CD8-positive, alpha-beta T cell (primary cell): ENCODE measurements at regions of chr19 and their contacts with region 1.

Region 1: DNA sequence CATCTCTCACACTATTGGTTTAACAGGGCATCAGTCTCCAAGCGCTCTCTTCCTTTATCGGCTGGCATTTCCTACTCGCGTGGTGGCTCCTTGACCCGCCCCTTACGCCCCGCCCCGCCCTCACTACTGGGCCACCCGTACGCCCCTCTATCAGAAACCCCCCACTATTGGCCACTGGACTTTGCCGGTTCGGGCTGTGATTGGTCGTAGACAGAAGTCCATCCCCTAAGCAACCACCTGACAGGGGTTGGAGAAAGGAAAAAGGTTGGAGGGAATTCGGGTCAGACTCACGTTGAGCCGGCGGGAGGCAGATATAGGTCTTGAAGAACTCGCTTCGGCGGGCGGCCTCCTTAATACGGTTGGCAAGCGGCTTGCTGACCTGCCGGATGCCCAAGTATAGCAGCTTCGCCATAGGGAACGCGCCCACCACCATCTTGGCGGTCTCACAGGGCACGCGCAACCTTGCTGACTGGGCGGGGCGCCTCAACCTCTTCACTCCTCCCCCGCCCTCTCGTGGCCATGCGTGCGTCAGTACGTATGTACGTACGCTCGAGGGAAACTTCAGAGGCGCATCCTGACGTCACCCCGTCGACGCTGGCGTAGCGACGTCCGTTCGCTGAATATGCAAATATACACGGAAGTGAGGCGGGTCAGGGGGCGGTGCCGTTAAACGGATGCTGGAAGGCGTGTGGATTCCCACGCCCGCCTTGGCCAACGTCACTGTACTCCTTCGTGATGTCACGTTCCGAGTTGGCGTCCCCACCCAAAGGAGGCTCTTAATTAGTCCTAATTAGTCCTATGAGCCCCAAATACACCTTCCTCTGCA is at the start of gene OPA3:
- DNase-seq: peak; percentile 97 to 100 (median 99)
- ATAC-seq: peak; percentile 86
- H3K4me3 ChIP-seq: peak within 1 kb of the TSS; percentile 80 to 86
- H3K4me3 Mint-ChIP-seq: peak within 1 kb of the TSS; percentile 96
- H3K27ac ChIP-seq: peak within 1 kb of the TSS; percentile 95 to 99
- H3K27ac Mint-ChIP-seq: peak within 1 kb of the TSS; percentile 99
- H3K4me1 ChIP-seq: peaks cover 6% of the 10 kb centered on the region
- H3K4me1 Mint-ChIP-seq: peaks cover 19% of the 10 kb centered on the region
- H3K27me3 ChIP-seq: no peaks in the 10 kb centered on the region
- H3K27me3 Mint-ChIP-seq: peaks cover 7% of the 10 kb centered on the region
- CTCF ChIP-seq: no peak
- total RNA-seq, gene OPA3: 5.6 to 5.7 TPM

Region 2: GRCh38 chr19:44746946-44747738 is 837.4 kb before region 1 on chr19:
- CTCF ChIA-PET with region 1: no interaction called
- POLR2A ChIA-PET with region 1: no interaction called
- intact Hi-C with region 1: loop called in 1 of 2 experiments (anchors 5 kb)
- DNase-seq: peak; percentile 59 to 97 (median 91)
- ATAC-seq: peak; percentile 86
- H3K4me3 ChIP-seq: peak overlapping the region; percentile 60 to 63
- H3K4me3 Mint-ChIP-seq: peak overlapping the region; percentile 91
- H3K27ac ChIP-seq: peak overlapping the region; percentile 41 to 89
- H3K27ac Mint-ChIP-seq: peak overlapping the region; percentile 95
- H3K4me1 ChIP-seq: peaks cover 42% of the 10 kb centered on the region
- H3K4me1 Mint-ChIP-seq: peaks cover 49% of the 10 kb centered on the region
- H3K27me3 ChIP-seq: no peaks in the 10 kb centered on the region
- H3K27me3 Mint-ChIP-seq: no peaks in the 10 kb centered on the region
- CTCF ChIP-seq: no peak

Region 3: DNA sequence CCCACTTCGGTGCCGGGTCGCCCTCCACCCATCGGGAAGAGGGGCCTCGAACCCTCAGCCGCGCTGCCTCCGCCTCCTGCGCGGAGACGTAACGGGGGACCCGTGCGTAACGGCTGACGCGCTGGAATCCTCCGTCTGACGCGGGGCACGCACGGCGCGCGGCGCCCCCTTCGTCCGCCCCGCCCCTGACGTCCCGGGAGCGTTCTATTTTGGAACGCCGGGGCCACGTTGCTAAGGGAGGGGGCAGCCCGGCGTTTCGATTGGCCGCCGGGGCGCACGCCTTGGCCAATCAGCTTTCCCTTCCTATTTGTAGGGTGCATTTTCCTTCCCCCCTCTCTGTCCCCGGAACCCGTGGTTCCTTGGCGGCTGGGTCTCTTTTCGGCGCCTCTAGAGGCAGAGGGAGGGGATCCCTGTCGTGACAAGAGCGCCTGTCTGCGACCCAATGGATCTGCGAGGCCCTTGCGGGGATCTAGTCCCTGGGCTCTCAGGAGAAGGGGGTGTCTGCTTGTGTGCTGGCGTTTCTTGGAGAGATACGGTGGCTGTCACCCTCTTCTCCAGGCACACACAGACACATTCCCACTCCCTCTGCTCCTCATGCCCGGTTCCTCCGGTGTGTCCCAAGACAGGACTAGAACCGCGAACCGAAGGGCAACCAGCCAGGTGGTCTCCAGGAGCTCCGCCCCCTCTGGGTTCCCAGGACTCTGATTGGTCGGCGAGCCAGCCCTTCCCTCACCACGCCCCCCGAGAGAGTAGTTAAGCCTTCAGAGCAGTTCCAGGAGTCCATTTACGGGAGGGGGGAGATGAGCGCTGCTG is 115.2 kb before region 1 on chr19:
- CTCF ChIA-PET with region 1: interaction called, 3 read pairs
- POLR2A ChIA-PET with region 1: no interaction called
- intact Hi-C with region 1: loop called in 1 of 2 experiments (anchors 1 kb)
- DNase-seq: peak; percentile 81 to 97 (median 93)
- ATAC-seq: peak; percentile 63
- H3K4me3 ChIP-seq: peak overlapping the region; percentile 85 to 98
- H3K4me3 Mint-ChIP-seq: peak overlapping the region; percentile 93
- H3K27ac ChIP-seq: peak overlapping the region; percentile 99 to 100
- H3K27ac Mint-ChIP-seq: peak overlapping the region; percentile 98
- H3K4me1 ChIP-seq: peaks cover 16% of the 10 kb centered on the region
- H3K4me1 Mint-ChIP-seq: peaks cover 17% of the 10 kb centered on the region
- H3K27me3 ChIP-seq: no peaks in the 10 kb centered on the region
- H3K27me3 Mint-ChIP-seq: peaks cover 15% of the 10 kb centered on the region
- CTCF ChIP-seq: no peak

Region 4: GRCh38 chr19:45506246-45506990 is 78.1 kb before region 1 on chr19:
- CTCF ChIA-PET with region 1: no interaction called
- POLR2A ChIA-PET with region 1: no interaction called
- intact Hi-C with region 1: loop called (anchors 1 to 2 kb)
- DNase-seq: peak; percentile 93 to 99 (median 97)
- ATAC-seq: peak; percentile 79
- H3K4me3 ChIP-seq: peak overlapping the region; percentile 74 to 90
- H3K4me3 Mint-ChIP-seq: peak overlapping the region; percentile 88
- H3K27ac ChIP-seq: peak overlapping the region; percentile 85 to 91
- H3K27ac Mint-ChIP-seq: peak overlapping the region; percentile 93
- H3K4me1 ChIP-seq: peaks cover 33% of the 10 kb centered on the region
- H3K4me1 Mint-ChIP-seq: peaks cover 39% of the 10 kb centered on the region
- H3K27me3 ChIP-seq: no peaks in the 10 kb centered on the region
- H3K27me3 Mint-ChIP-seq: no peaks in the 10 kb centered on the region
- CTCF ChIP-seq: peak; percentile 32

Region 5: GRCh38 chr19:45558399-45558878 is 26.1 kb before region 1 on chr19:
- CTCF ChIA-PET with region 1: interaction called, 5 read pairs
- POLR2A ChIA-PET with region 1: interaction called, 6 read pairs
- intact Hi-C with region 1: loop called in 1 of 2 experiments (anchors 2 kb)
- DNase-seq: peak; percentile 32 to 89 (median 71)
- ATAC-seq: peak; percentile 99
- H3K4me3 ChIP-seq: no peak overlapping the region
- H3K4me3 Mint-ChIP-seq: no peak overlapping the region
- H3K27ac ChIP-seq: no peak overlapping the region
- H3K27ac Mint-ChIP-seq: no peak overlapping the region
- H3K4me1 ChIP-seq: peaks cover 42% of the 10 kb centered on the region
- H3K4me1 Mint-ChIP-seq: peaks cover 35% of the 10 kb centered on the region
- H3K27me3 ChIP-seq: no peaks in the 10 kb centered on the region
- H3K27me3 Mint-ChIP-seq: no peaks in the 10 kb centered on the region
- CTCF ChIP-seq: peak; percentile 79